GM18951 (cell line): ENCODE measurements at regions of chr17 and their contacts with region 1.

Region 1: GRCh38 chr17:4004517-4005295 is 40.5 kb upstream of the ATP2A3 start:
- POLR2A ChIP-seq: no peak

Region 2: DNA sequence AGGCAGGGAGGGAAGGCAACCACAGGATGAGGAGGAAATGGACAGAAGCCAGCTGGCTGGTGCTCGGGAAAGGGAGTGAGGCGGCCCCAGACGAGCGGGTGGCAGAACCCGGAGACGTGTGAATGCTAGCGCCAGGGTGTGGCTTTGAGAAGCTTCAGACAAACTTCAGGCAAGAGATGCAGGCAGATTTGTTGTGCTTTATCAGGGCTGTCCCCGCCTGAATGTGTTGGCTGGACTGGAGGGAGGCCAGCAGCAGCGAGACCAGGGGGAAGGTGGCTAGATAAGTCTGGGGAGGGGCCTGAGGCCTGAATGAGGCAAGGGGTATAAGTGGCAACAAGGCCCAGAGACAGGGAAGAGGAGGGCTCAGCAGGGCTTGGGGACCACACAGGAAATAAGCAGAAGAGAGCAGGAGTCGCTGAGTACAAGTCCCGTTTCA is 133.8 kb before region 1 on chr17:
- in situ Hi-C with region 1: loop called (anchors 25 kb)
- POLR2A ChIP-seq: no peak

Region 3: DNA sequence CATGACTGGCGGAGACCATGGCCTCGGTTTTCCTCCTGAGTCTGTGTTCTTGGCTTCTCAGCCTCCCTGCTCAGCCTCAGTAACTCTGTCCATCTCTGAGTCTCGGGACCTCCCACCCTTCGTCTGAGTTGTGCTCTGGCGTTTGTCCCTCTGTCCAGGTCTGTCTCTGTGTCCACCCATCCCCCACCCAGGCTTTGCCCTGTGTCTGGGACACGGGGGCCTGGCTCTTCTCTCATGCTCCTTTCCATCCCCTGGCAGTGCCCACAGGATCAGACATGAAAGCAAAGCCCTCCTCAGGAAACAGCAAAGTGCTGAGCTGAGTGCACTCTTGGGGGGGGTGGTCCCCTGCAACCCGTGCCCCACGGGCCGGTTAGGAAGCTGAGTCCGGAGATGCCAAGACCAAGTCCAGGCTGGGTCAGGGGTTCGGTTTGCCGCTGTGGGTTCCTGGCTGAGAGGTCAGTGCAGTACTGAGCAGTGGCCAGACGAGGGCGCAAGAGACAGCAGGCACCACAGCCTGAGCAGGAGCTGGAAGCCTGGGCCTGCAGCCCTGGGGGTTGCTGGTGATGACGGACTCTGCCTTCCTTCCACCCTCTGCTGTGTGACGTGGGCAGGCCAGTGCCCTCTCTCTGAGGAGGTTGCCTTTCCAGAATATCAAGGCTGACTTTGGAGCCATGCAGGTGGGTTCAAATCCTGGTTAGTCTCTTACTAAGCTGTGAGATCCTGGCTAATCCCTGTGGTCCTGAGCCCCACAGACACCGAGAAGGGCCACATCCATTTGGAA is 91.0 kb before region 1 on chr17:
- in situ Hi-C with region 1: no loop called
- POLR2A ChIP-seq: no peak